ENCODE measurements at regions of chr13 and their contacts with region 1.

Region 1: DNA sequence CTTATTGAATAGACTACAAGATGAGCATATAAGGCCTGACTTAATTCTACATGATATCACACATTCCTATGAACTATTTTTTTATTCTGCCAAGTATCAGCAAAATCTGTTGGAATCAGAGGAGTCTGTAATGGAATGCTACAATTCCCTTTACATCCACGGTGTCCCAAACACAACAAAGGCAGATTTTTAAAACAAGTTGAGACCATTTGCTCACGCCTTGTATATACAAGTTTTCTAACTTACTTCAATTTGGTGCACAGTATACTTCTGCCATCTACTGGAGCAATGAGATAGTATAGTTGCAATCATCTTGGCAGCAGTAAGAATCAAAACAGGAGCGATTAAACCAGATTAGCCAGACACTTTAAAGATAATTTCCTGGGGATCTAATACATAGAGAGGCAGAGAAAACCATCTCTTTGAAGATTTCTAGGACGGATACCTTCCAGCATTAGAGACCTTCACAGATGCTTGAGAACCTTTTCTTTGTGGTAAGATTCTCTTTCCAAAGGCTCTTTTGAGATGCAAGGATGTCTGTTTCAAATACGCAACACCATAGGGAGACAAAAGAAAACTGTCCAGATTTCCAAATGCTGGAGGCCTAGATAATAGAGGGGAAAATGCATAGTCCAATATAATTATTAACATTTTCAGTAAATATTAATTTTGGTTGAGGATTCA is 302.0 kb upstream of the MIR17HG start:
- DNase-seq: no peak
- H3K4me3 Mint-ChIP-seq: no peak overlapping the region
- H3K27ac Mint-ChIP-seq: no peak overlapping the region
- H3K4me1 Mint-ChIP-seq: no peaks in the 10 kb centered on the region
- H3K27me3 Mint-ChIP-seq: no peaks in the 10 kb centered on the region
- CTCF ChIP-seq: no peak

Region 2: GRCh38 chr13:90253806-90254205 is 791.7 kb before region 1 on chr13:
- CTCF ChIA-PET with region 1: no interaction called
- intact Hi-C with region 1: no loop called
- DNase-seq: no peak
- H3K4me3 Mint-ChIP-seq: no peak overlapping the region
- H3K27ac Mint-ChIP-seq: no peak overlapping the region
- H3K4me1 Mint-ChIP-seq: no peaks in the 10 kb centered on the region
- H3K27me3 Mint-ChIP-seq: no peaks in the 10 kb centered on the region
- CTCF ChIP-seq: no peak

Region 3: DNA sequence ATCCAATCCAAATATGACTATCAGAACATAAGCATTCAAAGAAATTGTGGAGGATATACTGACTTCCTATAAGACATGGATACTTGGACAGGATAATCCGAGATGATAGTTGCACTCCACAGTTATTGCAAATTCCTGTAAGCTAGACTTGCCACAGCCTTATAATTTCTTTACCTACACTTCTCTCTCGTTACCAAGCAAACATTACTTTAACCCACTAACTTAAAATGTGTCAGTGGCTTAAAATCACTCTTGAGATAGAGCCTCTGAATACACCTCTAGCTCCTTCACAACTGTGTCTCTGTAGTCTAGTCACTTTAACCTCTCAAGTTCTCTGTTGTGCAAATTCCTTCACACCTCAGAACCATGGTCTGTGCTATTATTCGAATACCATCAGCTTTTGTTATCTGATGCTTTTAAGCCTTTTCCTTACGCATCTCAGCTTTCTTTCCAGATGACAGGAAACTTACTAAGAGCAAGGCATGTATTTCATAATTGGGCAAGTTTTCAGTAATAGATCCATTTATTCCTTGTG is 172.9 kb before region 1 on chr13:
- CTCF ChIA-PET with region 1: no interaction called
- intact Hi-C with region 1: loop called (anchors 10 kb)
- DNase-seq: no peak
- H3K4me3 Mint-ChIP-seq: no peak overlapping the region
- H3K27ac Mint-ChIP-seq: no peak overlapping the region
- H3K4me1 Mint-ChIP-seq: no peaks in the 10 kb centered on the region
- H3K27me3 Mint-ChIP-seq: no peaks in the 10 kb centered on the region
- CTCF ChIP-seq: no peak

Region 4: DNA sequence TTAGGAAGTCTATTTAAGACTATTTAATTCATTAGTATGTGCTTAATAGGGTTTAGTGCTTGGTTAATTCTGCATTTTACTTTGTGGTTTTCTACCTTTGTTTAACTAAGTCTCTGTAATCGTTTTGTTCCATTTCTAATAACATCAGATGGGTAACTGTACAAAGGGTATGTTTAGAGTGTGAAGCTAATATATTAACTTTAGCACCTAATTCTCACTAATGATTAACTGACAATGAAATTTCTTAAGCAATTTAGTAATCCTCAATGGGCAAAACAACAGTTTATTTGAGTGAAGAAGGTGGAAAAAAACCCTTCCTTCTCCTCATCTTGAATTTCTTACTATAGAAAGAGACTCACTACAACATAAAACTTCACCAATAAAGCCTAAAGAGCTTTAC is 146.1 kb before region 1 on chr13:
- CTCF ChIA-PET with region 1: no interaction called
- intact Hi-C with region 1: no loop called
- DNase-seq: no peak
- H3K4me3 Mint-ChIP-seq: no peak overlapping the region
- H3K27ac Mint-ChIP-seq: no peak overlapping the region
- H3K4me1 Mint-ChIP-seq: no peaks in the 10 kb centered on the region
- H3K27me3 Mint-ChIP-seq: no peaks in the 10 kb centered on the region
- CTCF ChIP-seq: no peak

Region 5: DNA sequence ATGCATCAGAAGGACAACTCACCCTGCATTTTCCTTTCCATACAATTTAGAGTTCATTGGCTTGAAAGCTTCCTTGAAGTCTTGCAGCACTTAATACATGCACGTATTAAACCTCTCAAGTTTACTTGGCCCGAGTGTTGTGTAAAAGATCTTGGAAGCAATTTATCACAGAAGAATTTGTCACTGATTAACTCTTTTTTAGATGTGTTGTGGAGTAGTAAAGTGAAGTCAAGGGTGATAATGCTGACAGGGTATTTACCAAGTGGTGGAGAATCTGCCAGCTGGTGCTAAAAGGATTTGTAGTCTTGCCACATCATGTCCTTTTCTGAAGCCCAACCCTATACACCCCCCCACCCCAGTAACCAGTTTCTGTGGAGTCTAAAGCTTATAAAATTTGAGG is 119.0 kb before region 1 on chr13:
- CTCF ChIA-PET with region 1: no interaction called
- intact Hi-C with region 1: no loop called
- DNase-seq: no peak
- H3K4me3 Mint-ChIP-seq: no peak overlapping the region
- H3K27ac Mint-ChIP-seq: no peak overlapping the region
- H3K4me1 Mint-ChIP-seq: no peaks in the 10 kb centered on the region
- H3K27me3 Mint-ChIP-seq: no peaks in the 10 kb centered on the region
- CTCF ChIP-seq: no peak

Measured in Calu3 (cell line).